Right ventricle myocardium superior (tissue), 1 donor: ENCODE measurements at regions of chr17 and their contacts with region 1.

Region 1: GRCh38 chr17:700504-701094 is 14.0 kb downstream of the VPS53 start:
- DNase-seq: no peak
- ATAC-seq: no peak

Region 2: GRCh38 chr17:409848-410545 is 290.6 kb before region 1 on chr17:
- intact Hi-C with region 1: loop called (anchors 5 kb)
- DNase-seq: peak; percentile 100
- ATAC-seq: peak; percentile 94